GM10248 (cell line): ENCODE measurements at regions of chr22 and their contacts with region 1.

Region 1: GRCh38 chr22:25896098-25896497 is 154.1 kb downstream of the MYO18B start:
- DNase-seq: peak; percentile 18
- CTCF ChIP-seq: peak; percentile 3

Region 2: DNA sequence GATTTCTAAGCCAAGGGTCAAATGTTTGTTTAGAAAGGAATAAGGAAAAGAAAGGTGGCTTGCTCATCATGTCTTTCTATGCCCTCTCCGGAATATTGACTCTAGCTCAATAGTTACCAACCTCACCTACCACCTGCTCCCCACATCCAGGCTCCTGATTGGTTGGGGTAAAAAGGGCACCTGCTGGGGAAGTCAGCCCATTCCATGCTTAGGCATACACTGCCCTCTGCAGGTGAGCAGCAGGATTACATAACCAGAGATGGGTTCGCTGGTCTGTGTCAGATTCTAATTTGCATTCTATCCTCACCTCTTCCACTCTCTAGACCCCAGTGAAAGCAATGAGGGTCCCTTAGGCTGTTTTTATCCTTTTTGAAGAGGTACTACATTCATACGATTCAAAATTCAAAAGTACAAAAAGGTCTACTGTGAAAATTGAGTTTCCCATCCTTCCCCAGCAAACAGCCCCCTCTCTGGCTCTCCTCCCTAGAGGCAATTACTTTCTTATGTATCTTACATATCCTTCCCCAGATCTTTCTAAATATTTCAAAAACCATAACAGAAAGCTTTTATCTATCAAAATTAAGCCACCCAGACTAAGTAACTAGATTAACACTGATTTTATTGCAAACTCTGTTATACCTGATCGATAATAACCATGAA is 435.0 kb after region 1 on chr22:
- CTCF ChIA-PET with region 1: interaction called, 25 read pairs
- POLR2A ChIA-PET with region 1: no interaction called
- DNase-seq: peak; percentile 77
- CTCF ChIP-seq: peak; percentile 92

Region 3: GRCh38 chr22:26511857-26512793 is 616.0 kb after region 1 on chr22 and contains the start of gene TFIP11:
- CTCF ChIA-PET with region 1: no interaction called
- POLR2A ChIA-PET with region 1: no interaction called
- DNase-seq: peak; percentile 97
- CTCF ChIP-seq: peak; percentile 10